CD8-positive, alpha-beta T cell (primary cell): ENCODE measurements at regions of chr2 and their contacts with region 1.

Region 1: GRCh38 chr2:229800997-229801754 is 86.8 kb upstream of the DNER start:
- DNase-seq: peak; percentile 48 to 82 (median 75)
- ATAC-seq: peak; percentile 77
- H3K4me3 ChIP-seq: no peak overlapping the region
- H3K4me3 Mint-ChIP-seq: no peak overlapping the region
- H3K27ac ChIP-seq: no peak overlapping the region
- H3K27ac Mint-ChIP-seq: no peak overlapping the region
- H3K4me1 ChIP-seq: no peaks in the 10 kb centered on the region
- H3K4me1 Mint-ChIP-seq: no peaks in the 10 kb centered on the region
- H3K27me3 ChIP-seq: no peaks in the 10 kb centered on the region
- H3K27me3 Mint-ChIP-seq: no peaks in the 10 kb centered on the region
- CTCF ChIP-seq: peak; percentile 87

Region 2: GRCh38 chr2:229780856-229781773 is 20.1 kb before region 1 on chr2:
- CTCF ChIA-PET with region 1: interaction called, 26 read pairs
- POLR2A ChIA-PET with region 1: no interaction called
- intact Hi-C with region 1: no loop called
- DNase-seq: peak in 2 of 9 experiments; percentile 41 to 61
- ATAC-seq: peak; percentile 84
- H3K4me3 ChIP-seq: no peak overlapping the region
- H3K4me3 Mint-ChIP-seq: no peak overlapping the region
- H3K27ac ChIP-seq: no peak overlapping the region
- H3K27ac Mint-ChIP-seq: peak overlapping the region; percentile 28
- H3K4me1 ChIP-seq: peaks cover 4% of the 10 kb centered on the region
- H3K4me1 Mint-ChIP-seq: peaks cover 27% of the 10 kb centered on the region
- H3K27me3 ChIP-seq: no peaks in the 10 kb centered on the region
- H3K27me3 Mint-ChIP-seq: no peaks in the 10 kb centered on the region
- CTCF ChIP-seq: peak; percentile 98

Region 3: GRCh38 chr2:229843613-229844012 is 42.4 kb after region 1 on chr2:
- CTCF ChIA-PET with region 1: interaction called, 3 read pairs
- POLR2A ChIA-PET with region 1: no interaction called
- intact Hi-C with region 1: loop called in 1 of 2 experiments (anchors 5 kb)
- DNase-seq: no peak
- ATAC-seq: no peak
- H3K4me3 ChIP-seq: no peak overlapping the region
- H3K4me3 Mint-ChIP-seq: no peak overlapping the region
- H3K27ac ChIP-seq: no peak overlapping the region
- H3K27ac Mint-ChIP-seq: no peak overlapping the region
- H3K4me1 ChIP-seq: peaks cover 8% of the 10 kb centered on the region
- H3K4me1 Mint-ChIP-seq: peaks cover 54% of the 10 kb centered on the region
- H3K27me3 ChIP-seq: no peaks in the 10 kb centered on the region
- H3K27me3 Mint-ChIP-seq: no peaks in the 10 kb centered on the region
- CTCF ChIP-seq: no peak

Region 4: GRCh38 chr2:230007931-230008707 is 206.9 kb after region 1 on chr2:
- CTCF ChIA-PET with region 1: interaction called, 6 read pairs
- POLR2A ChIA-PET with region 1: no interaction called
- intact Hi-C with region 1: loop called (anchors 1 to 10 kb)
- DNase-seq: peak; percentile 56 to 87 (median 73)
- ATAC-seq: peak; percentile 48
- H3K4me3 ChIP-seq: no peak overlapping the region
- H3K4me3 Mint-ChIP-seq: no peak overlapping the region
- H3K27ac ChIP-seq: no peak overlapping the region
- H3K27ac Mint-ChIP-seq: no peak overlapping the region
- H3K4me1 ChIP-seq: no peaks in the 10 kb centered on the region
- H3K4me1 Mint-ChIP-seq: peaks cover 3% of the 10 kb centered on the region
- H3K27me3 ChIP-seq: no peaks in the 10 kb centered on the region
- H3K27me3 Mint-ChIP-seq: no peaks in the 10 kb centered on the region
- CTCF ChIP-seq: peak; percentile 83

Region 5: DNA sequence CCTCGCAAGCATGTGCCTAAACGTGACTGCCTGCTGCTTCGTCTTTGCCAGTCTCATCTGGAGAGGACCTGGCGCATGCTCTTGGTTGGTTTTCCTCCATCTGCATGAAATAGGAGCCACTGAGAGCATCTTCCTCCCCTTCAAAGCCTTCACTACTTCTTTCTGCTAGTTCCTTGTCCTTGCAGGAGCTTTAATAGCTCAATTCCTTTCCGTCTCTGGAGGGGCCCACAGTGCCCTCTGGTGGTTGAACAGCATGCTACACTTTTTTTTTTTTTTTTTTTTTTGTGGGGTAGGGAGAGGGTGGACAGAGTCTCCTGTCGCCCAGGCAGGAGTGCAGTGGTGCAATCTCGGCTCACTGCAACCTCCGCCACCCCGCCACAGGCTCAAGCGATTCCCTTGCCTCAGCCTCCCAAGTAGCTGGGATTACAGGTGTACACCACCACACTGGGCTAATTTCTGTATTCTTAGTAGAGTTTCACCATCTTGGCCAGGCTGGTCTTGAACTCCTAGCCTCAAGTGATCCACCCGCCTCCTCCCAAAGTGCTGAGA is 359.0 kb after region 1 on chr2:
- CTCF ChIA-PET with region 1: interaction called, 6 read pairs
- POLR2A ChIA-PET with region 1: no interaction called
- intact Hi-C with region 1: loop called (anchors 2 to 5 kb)
- DNase-seq: peak in 8 of 9 experiments; percentile 27 to 68 (median 55)
- ATAC-seq: peak; percentile 61
- H3K4me3 ChIP-seq: no peak overlapping the region
- H3K4me3 Mint-ChIP-seq: no peak overlapping the region
- H3K27ac ChIP-seq: no peak overlapping the region
- H3K27ac Mint-ChIP-seq: no peak overlapping the region
- H3K4me1 ChIP-seq: no peaks in the 10 kb centered on the region
- H3K4me1 Mint-ChIP-seq: peaks cover 2% of the 10 kb centered on the region
- H3K27me3 ChIP-seq: no peaks in the 10 kb centered on the region
- H3K27me3 Mint-ChIP-seq: no peaks in the 10 kb centered on the region
- CTCF ChIP-seq: peak; percentile 88